CD4-positive, alpha-beta memory T cell (primary cell): ENCODE measurements at regions of chr16 and their contacts with region 1.

Region 1: GRCh38 chr16:26599785-26600104 is 467.0 kb upstream of the C16orf82 start:
- DNase-seq: no peak
- H3K4me3 ChIP-seq: no peak overlapping the region
- H3K4me3 Mint-ChIP-seq: peak overlapping the region in 1 of 8 donors; percentile 38
- H3K27ac ChIP-seq: no peak overlapping the region
- H3K27ac Mint-ChIP-seq: peak overlapping the region in 5 of 7 donors; percentile 19 to 65 (median 37)
- H3K4me1 ChIP-seq: peaks cover 32% of the 10 kb centered on the region
- H3K4me1 Mint-ChIP-seq: peaks cover 4 to 44% (median 23%) of the 10 kb centered on the region in 4 donors
- H3K27me3 ChIP-seq: no peaks in the 10 kb centered on the region
- H3K27me3 Mint-ChIP-seq: no peaks in the 10 kb centered on the region

Region 2: GRCh38 chr16:26554030-26554429 is 45.7 kb before region 1 on chr16:
- CTCF ChIA-PET with region 1: no interaction called
- POLR2A ChIA-PET with region 1: no interaction called
- intact Hi-C with region 1: loop called (anchors 1 kb)
- DNase-seq: no peak
- H3K4me3 ChIP-seq: no peak overlapping the region
- H3K4me3 Mint-ChIP-seq: no peak overlapping the region
- H3K27ac ChIP-seq: no peak overlapping the region
- H3K27ac Mint-ChIP-seq: no peak overlapping the region
- H3K4me1 ChIP-seq: no peaks in the 10 kb centered on the region
- H3K4me1 Mint-ChIP-seq: no peaks in the 10 kb centered on the region
- H3K27me3 ChIP-seq: no peaks in the 10 kb centered on the region
- H3K27me3 Mint-ChIP-seq: peaks cover 4 to 5% of the 10 kb centered on the region in 2 donors